Ovary (tissue), 10 donors: ENCODE measurements at regions of chr13 and their contacts with region 1.

Region 1: GRCh38 chr13:48303359-48304142 is at the start of gene RB1:
- DNase-seq: peak; percentile 93 to 96 (median 95)
- H3K4me3 ChIP-seq: peak within 1 kb of the TSS; percentile 92
- H3K27ac ChIP-seq: peak within 1 kb of the TSS; percentile 95 to 98
- H3K4me1 ChIP-seq: peaks cover 8% of the 10 kb centered on the region
- H3K27me3 ChIP-seq: no peaks in the 10 kb centered on the region
- CTCF ChIP-seq: peak in 2 of 3 donors; percentile 11 to 39
- EP300 ChIP-seq: peak; percentile 20
- POLR2A ChIP-seq: peak; percentile 97
- total RNA-seq, gene RB1: 23.7 to 36.6 (median 27.3) TPM

Region 2: GRCh38 chr13:48126944-48127830 is 176.4 kb before region 1 on chr13:
- intact Hi-C with region 1: loop called in 1 of 4 experiments (anchors 5 kb)
- DNase-seq: peak; percentile 27 to 66 (median 48)
- H3K4me3 ChIP-seq: no peak overlapping the region
- H3K27ac ChIP-seq: peak overlapping the region in 1 of 2 donors; percentile 39
- H3K4me1 ChIP-seq: peaks cover 12% of the 10 kb centered on the region
- H3K27me3 ChIP-seq: no peaks in the 10 kb centered on the region
- CTCF ChIP-seq: peak; percentile 42 to 76 (median 71)
- EP300 ChIP-seq: no peak
- POLR2A ChIP-seq: no peak

Region 3: GRCh38 chr13:48244159-48244558 is 59.4 kb before region 1 on chr13:
- intact Hi-C with region 1: loop called in 3 of 4 experiments (anchors 5 to 10 kb)
- DNase-seq: no peak
- H3K4me3 ChIP-seq: no peak overlapping the region
- H3K27ac ChIP-seq: no peak overlapping the region
- H3K4me1 ChIP-seq: peaks cover 10% of the 10 kb centered on the region
- H3K27me3 ChIP-seq: no peaks in the 10 kb centered on the region
- CTCF ChIP-seq: no peak
- EP300 ChIP-seq: no peak
- POLR2A ChIP-seq: no peak